GM10248 (cell line): ENCODE measurements at regions of chr1 and their contacts with region 1.

Region 1: GRCh38 chr1:64823691-64824476 is 79.0 kb downstream of the RAVER2 start:
- DNase-seq: peak; percentile 56
- CTCF ChIP-seq: peak; percentile 75

Region 2: GRCh38 chr1:64469977-64470664 is 353.8 kb before region 1 on chr1 and contains the start of gene CACHD1:
- CTCF ChIA-PET with region 1: no interaction called
- POLR2A ChIA-PET with region 1: no interaction called
- DNase-seq: peak; percentile 61
- CTCF ChIP-seq: no peak

Region 3: DNA sequence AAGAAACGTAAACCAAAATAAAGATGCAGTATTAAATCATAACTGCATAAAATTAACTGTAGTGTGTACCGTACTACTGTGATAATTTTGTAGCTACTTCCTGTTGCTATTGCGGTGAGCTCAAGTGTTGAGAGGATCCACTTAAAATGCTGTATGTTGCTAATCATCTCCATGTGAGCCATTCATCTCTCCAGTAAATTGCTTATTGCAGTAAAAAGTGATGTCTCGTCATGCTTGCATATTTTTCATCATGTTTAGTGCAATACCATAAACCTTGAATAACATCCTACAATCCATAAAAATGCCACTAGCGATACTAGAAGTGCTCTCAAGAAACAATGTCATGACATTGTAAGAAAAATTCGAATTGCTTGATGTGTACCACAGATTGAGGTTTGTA is 12.8 kb before region 1 on chr1:
- CTCF ChIA-PET with region 1: interaction called, 15 read pairs
- POLR2A ChIA-PET with region 1: no interaction called
- DNase-seq: no peak
- CTCF ChIP-seq: no peak